CD8-positive, alpha-beta T cell (primary cell): ENCODE measurements at regions of chr9 and their contacts with region 1.

Region 1: DNA sequence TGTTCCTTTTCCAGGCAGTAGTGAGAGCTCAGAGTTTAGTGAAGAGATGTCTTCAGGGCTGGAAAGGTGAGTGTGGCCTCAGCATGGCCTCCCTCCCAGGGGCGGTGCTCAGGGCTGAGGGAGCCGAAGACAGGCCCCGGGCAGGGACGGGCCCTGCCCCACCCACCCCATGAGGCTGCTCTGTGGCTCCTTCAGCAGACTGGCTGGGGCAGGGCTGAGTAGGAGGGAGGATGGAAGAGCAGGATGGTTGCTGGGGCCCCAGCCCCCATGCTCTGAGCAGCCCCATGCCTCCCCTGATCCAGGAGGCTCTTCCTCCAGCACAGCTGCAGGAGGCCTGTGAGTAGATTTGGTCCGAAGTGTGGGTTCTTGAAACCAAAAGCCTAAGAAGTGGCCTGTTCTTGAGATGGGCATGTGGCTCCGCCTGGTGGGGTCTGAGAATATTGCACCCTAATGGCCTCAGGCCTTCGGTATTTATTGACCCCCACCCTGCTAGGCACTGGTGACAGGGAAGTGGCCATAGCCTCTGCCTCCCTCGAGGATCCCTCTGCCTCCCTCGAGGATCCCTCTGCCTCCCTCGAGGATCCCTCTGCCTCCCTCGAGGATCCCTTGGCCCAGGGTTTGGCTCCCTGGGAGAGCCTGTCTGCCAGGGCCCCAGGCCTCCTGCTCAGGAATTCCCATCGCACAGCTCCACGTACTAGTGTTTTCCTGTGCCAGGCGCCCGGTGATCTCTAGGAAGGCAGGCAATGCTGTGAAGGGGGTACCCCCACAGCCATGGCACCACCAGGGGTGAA is 65.4 kb upstream of the GARNL3 start:
- DNase-seq: peak; percentile 59 to 87 (median 79)
- ATAC-seq: peak; percentile 85
- H3K4me3 ChIP-seq: no peak overlapping the region
- H3K4me3 Mint-ChIP-seq: no peak overlapping the region
- H3K27ac ChIP-seq: no peak overlapping the region
- H3K27ac Mint-ChIP-seq: no peak overlapping the region
- H3K4me1 ChIP-seq: peaks cover 12% of the 10 kb centered on the region
- H3K4me1 Mint-ChIP-seq: peaks cover 11% of the 10 kb centered on the region
- H3K27me3 ChIP-seq: peaks cover 0 to 4% of the 10 kb centered on the region in 2 experiments
- H3K27me3 Mint-ChIP-seq: no peaks in the 10 kb centered on the region
- CTCF ChIP-seq: peak; percentile 87

Region 2: GRCh38 chr9:126652140-126652558 is 547.0 kb before region 1 on chr9:
- CTCF ChIA-PET with region 1: no interaction called
- POLR2A ChIA-PET with region 1: no interaction called
- intact Hi-C with region 1: no loop called
- DNase-seq: no peak
- ATAC-seq: no peak
- H3K4me3 ChIP-seq: no peak overlapping the region
- H3K4me3 Mint-ChIP-seq: no peak overlapping the region
- H3K27ac ChIP-seq: no peak overlapping the region
- H3K27ac Mint-ChIP-seq: no peak overlapping the region
- H3K4me1 ChIP-seq: no peaks in the 10 kb centered on the region
- H3K4me1 Mint-ChIP-seq: no peaks in the 10 kb centered on the region
- H3K27me3 ChIP-seq: peaks cover 0 to 17% of the 10 kb centered on the region in 2 experiments
- H3K27me3 Mint-ChIP-seq: peaks cover 56% of the 10 kb centered on the region
- CTCF ChIP-seq: no peak

Region 3: DNA sequence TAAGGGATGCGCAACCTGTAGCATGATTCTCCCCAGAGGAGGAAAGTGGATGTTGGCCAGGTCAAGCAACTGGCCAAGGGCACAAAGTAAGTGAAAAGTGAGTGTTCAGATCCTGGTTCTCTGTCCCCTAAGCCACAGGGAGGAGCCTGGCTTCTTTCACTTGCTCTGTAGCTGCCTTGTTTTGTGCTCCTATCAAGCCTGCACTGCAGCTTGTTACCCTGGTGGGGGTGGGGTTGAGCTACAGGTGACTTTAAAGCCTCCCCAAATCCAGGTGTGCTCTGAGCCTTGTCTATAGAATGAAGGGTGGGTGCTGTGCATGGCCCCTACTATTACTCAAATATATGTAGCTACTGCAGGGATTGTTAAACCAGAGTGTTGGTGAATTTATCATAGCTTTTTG is 251.7 kb before region 1 on chr9:
- CTCF ChIA-PET with region 1: interaction called, 216 read pairs
- POLR2A ChIA-PET with region 1: no interaction called
- intact Hi-C with region 1: no loop called
- DNase-seq: peak in 2 of 9 experiments; percentile 17 to 36
- ATAC-seq: peak; percentile 26
- H3K4me3 ChIP-seq: no peak overlapping the region
- H3K4me3 Mint-ChIP-seq: no peak overlapping the region
- H3K27ac ChIP-seq: no peak overlapping the region
- H3K27ac Mint-ChIP-seq: no peak overlapping the region
- H3K4me1 ChIP-seq: no peaks in the 10 kb centered on the region
- H3K4me1 Mint-ChIP-seq: no peaks in the 10 kb centered on the region
- H3K27me3 ChIP-seq: no peaks in the 10 kb centered on the region
- H3K27me3 Mint-ChIP-seq: peaks cover 7% of the 10 kb centered on the region
- CTCF ChIP-seq: no peak

Region 4: DNA sequence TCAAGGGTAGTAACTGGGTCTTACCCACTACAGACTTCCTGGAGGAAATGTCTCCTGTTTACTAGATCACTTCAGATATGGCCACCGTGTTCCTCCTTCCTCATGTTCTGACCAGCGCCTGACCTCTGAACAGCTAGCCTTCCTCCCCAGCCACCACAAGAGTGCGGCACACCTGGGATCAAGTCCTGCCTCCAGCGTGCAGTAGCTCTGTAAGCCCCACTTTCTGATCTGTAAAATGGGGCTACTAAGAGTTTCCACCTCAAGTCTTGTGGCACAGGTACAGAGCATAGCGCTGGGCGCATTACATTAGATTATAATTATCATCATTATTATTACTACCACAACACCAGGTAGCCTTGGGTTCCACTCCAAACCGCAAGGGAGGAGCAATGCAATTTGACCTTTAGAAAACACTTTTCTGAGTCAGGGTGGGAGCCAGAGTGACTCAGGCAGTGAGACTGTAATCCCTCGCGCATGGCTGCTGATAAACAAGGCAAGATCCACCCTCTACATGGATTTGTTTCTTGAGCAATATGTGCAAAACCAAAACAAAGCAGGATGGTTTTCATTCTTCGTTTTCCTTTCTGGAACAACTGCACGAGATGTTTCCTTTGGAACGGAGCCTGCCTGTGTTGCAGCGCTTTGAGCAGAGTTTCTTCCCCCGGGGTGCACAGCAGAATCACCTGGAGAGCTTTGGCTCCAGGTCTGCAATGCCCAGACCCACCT is 11.8 kb before region 1 on chr9:
- CTCF ChIA-PET with region 1: interaction called, 27 read pairs
- POLR2A ChIA-PET with region 1: no interaction called
- intact Hi-C with region 1: no loop called
- DNase-seq: no peak
- ATAC-seq: no peak
- H3K4me3 ChIP-seq: no peak overlapping the region
- H3K4me3 Mint-ChIP-seq: no peak overlapping the region
- H3K27ac ChIP-seq: no peak overlapping the region
- H3K27ac Mint-ChIP-seq: no peak overlapping the region
- H3K4me1 ChIP-seq: no peaks in the 10 kb centered on the region
- H3K4me1 Mint-ChIP-seq: no peaks in the 10 kb centered on the region
- H3K27me3 ChIP-seq: no peaks in the 10 kb centered on the region
- H3K27me3 Mint-ChIP-seq: no peaks in the 10 kb centered on the region
- CTCF ChIP-seq: no peak

Region 5: DNA sequence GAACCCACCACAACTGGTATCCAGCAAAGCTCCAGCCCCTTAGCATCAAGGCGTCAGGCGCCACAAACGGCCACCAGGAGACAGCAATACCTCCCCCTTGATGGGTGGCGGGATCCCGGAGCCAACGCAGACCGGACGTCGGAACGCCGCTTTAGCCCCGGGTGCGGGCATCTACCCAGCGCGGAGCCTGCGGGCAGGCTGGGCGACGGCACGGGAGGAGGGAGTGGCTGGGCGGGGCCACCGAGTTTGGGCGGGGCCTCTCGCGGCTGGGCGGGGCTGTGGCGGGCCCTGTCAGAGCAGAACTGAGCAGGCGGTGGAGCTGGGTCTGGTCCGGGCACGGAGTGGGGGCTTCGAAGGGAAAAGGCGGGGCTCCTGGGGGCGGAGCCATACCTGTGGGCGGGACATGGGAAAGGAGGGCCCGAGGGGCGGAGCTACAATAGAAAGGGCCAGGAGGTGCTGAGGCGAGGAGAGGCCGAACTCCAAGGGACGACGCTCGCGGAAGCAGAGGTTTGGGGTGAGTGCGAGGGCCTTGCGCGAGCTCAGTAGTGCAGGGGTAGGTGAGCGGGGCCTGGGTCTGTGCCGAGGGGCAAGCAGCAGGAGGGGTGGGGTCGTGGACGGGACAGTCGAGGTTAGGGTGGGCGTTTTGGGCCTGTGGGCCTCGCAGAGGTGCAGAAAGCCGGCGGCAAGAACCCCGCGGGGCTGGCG is 25.1 kb after region 1 on chr9:
- CTCF ChIA-PET with region 1: no interaction called
- POLR2A ChIA-PET with region 1: no interaction called
- intact Hi-C with region 1: no loop called
- DNase-seq: peak; percentile 75 to 91 (median 89)
- ATAC-seq: peak; percentile 82
- H3K4me3 ChIP-seq: peak overlapping the region; percentile 66 to 72
- H3K4me3 Mint-ChIP-seq: peak overlapping the region; percentile 82
- H3K27ac ChIP-seq: peak overlapping the region in 1 of 2 experiments; percentile 53
- H3K27ac Mint-ChIP-seq: peak overlapping the region; percentile 77
- H3K4me1 ChIP-seq: peaks cover 33% of the 10 kb centered on the region
- H3K4me1 Mint-ChIP-seq: peaks cover 42% of the 10 kb centered on the region
- H3K27me3 ChIP-seq: no peaks in the 10 kb centered on the region
- H3K27me3 Mint-ChIP-seq: peaks cover 2% of the 10 kb centered on the region
- CTCF ChIP-seq: no peak